ENCODE measurements at regions of chr2 and their contacts with region 1.

Region 1: DNA sequence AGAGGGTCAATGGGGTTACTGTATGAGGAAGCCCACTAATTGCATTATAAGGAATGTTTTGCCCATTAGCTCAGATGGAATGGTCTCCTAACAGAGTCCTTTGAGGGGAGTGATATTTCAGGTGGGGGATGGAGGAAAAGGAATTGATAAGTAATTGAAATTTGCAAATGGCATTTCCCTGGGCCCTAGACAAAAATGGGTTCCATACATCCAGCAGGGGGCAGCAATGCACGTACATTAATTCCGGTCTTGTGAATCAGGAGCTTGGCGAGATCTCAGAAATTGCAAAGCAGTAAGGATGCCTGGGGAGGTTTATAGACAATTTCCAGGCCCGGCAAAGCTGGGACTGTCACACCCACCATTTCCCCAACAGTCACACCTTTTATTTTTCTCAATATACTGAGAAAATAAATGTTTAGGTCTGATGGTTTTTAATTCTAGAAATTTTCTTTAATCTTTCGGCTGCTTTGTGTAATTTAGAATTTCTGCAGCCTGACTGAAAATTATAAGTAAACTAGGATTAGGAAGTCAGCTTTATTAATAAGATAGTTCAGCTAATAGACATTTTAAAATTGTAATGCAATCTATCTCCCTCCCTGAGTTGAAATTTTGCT is 122.8 kb downstream of the LYPD1 start:
- DNase-seq: peak; percentile 54 to 79 (median 67)
- ATAC-seq: no peak
- H3K4me3 ChIP-seq: no peak overlapping the region
- H3K27ac ChIP-seq: no peak overlapping the region
- H3K4me1 ChIP-seq: no peaks in the 10 kb centered on the region
- H3K27me3 ChIP-seq: no peaks in the 10 kb centered on the region

Region 2: DNA sequence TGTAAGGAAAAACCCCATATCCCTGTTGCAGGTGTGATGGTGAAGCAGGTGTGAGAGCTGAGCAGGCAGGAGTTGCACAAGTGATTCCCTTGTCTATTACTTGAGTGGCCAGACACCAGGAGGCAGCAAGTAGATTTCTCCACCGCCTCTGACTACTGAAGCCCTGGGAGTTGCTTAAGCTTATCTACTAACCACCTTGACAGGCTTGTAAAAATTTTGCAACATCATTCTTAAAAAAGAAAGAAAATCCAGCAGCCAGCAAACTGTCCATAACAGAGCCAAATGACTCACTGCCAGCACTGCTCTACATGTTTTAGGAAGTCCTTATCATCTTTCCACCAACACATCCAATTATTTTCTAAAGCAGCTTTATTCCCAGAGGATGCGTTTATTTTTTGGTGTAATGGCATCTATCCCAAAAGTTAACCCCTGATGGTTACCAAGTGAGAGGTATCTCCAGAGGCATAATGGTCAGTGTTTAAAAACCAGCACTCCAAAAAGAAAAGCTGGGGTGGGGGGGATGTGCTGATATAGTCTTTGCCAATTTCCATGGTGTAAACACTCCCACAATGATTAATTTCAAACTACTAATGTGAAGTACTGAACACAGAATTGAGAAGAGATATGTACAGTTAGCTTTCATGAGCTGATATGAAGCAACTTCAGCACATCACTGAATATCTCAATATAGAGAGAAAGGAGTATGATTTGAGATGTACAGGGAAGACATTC is 146.8 kb before region 1 on chr2:
- intact Hi-C with region 1: no loop called
- DNase-seq: no peak
- ATAC-seq: peak; percentile 21 to 22
- H3K4me3 ChIP-seq: no peak overlapping the region
- H3K27ac ChIP-seq: no peak overlapping the region
- H3K4me1 ChIP-seq: no peaks in the 10 kb centered on the region
- H3K27me3 ChIP-seq: no peaks in the 10 kb centered on the region

Region 3: GRCh38 chr2:132670496-132671150 is 123.4 kb after region 1 on chr2:
- intact Hi-C with region 1: no loop called
- DNase-seq: peak in 2 of 3 donors; percentile 59 to 60
- ATAC-seq: peak; percentile 60 to 67
- H3K4me3 ChIP-seq: peak overlapping the region; percentile 57
- H3K27ac ChIP-seq: no peak overlapping the region
- H3K4me1 ChIP-seq: peaks cover 6% of the 10 kb centered on the region
- H3K27me3 ChIP-seq: no peaks in the 10 kb centered on the region

Region 4: GRCh38 chr2:133171393-133172004 is 624.3 kb after region 1 on chr2:
- intact Hi-C with region 1: loop called in 1 of 4 experiments (anchors 10 kb)
- DNase-seq: no peak
- ATAC-seq: no peak
- H3K4me3 ChIP-seq: no peak overlapping the region
- H3K27ac ChIP-seq: no peak overlapping the region
- H3K4me1 ChIP-seq: no peaks in the 10 kb centered on the region
- H3K27me3 ChIP-seq: no peaks in the 10 kb centered on the region

Region 5: GRCh38 chr2:133844214-133844892 is 1297.2 kb after region 1 on chr2:
- intact Hi-C with region 1: loop called in 3 of 4 experiments (anchors 5 to 10 kb)
- DNase-seq: peak; percentile 46 to 79 (median 66)
- ATAC-seq: peak; percentile 74 to 76
- H3K4me3 ChIP-seq: no peak overlapping the region
- H3K27ac ChIP-seq: no peak overlapping the region
- H3K4me1 ChIP-seq: peaks cover 4% of the 10 kb centered on the region
- H3K27me3 ChIP-seq: no peaks in the 10 kb centered on the region